PC-3 (cell line): ENCODE measurements at regions of chr10 and their contacts with region 1.

Region 1: GRCh38 chr10:110497438-110498086 is at the start of gene DUSP5:
- DNase-seq: peak; percentile 95
- ATAC-seq: peak; percentile 34
- H3K4me3 ChIP-seq: peak within 1 kb of the TSS; percentile 96
- H3K27ac ChIP-seq: peak within 1 kb of the TSS; percentile 80
- H3K4me1 ChIP-seq: peaks cover 38% of the 10 kb centered on the region
- H3K27me3 ChIP-seq: no peaks in the 10 kb centered on the region
- CTCF ChIP-seq: no peak
- total RNA-seq, gene DUSP5: 205 and 206 TPM in 2 replicates

Region 2: DNA sequence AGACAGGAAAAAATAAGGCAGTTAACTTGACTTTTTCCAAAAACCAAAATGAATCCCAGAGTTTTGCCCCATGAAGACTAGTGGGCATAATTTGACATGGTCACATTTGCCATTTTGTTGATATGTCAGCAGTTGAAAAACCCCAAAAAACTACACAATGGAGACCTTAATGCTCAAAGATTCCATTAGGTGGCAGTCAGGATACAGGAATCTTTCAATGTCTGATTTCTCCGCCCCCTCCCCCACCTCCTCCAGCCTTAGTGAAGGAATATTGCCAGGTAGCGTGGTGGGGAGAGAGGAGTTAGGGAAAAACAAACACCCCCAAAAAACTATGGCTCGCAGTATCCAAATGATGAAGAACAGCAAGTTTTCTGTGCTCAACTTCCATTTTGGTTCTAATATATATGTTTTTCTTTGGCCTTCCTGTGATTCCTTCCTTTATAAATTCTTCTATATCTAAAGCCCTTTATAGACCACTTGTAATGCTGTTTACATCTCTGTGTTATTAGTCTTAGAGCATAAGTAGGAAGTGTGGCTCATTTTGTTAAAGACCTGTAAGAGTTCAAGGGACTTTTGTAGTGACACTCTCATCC is 186.1 kb before region 1 on chr10:
- CTCF ChIA-PET with region 1: no interaction called
- POLR2A ChIA-PET with region 1: interaction called, 4 read pairs
- intact Hi-C with region 1: loop called (anchors 1 kb)
- DNase-seq: peak; percentile 76
- ATAC-seq: peak; percentile 65
- H3K4me3 ChIP-seq: no peak overlapping the region
- H3K27ac ChIP-seq: peak overlapping the region; percentile 35
- H3K4me1 ChIP-seq: peaks cover 27% of the 10 kb centered on the region
- H3K27me3 ChIP-seq: no peaks in the 10 kb centered on the region
- CTCF ChIP-seq: peak; percentile 73

Region 3: GRCh38 chr10:110398419-110399162 is 99.0 kb before region 1 on chr10:
- CTCF ChIA-PET with region 1: no interaction called
- POLR2A ChIA-PET with region 1: interaction called, 6 read pairs
- intact Hi-C with region 1: loop called (anchors 1 kb)
- DNase-seq: peak; percentile 96
- ATAC-seq: peak; percentile 82
- H3K4me3 ChIP-seq: peak overlapping the region; percentile 41
- H3K27ac ChIP-seq: peak overlapping the region; percentile 98
- H3K4me1 ChIP-seq: peaks cover 52% of the 10 kb centered on the region
- H3K27me3 ChIP-seq: no peaks in the 10 kb centered on the region
- CTCF ChIP-seq: no peak

Region 4: GRCh38 chr10:110525349-110526260 is 28.0 kb after region 1 on chr10:
- CTCF ChIA-PET with region 1: no interaction called
- POLR2A ChIA-PET with region 1: no interaction called
- intact Hi-C with region 1: no loop called
- DNase-seq: peak; percentile 64
- ATAC-seq: peak; percentile 53
- H3K4me3 ChIP-seq: no peak overlapping the region
- H3K27ac ChIP-seq: peak overlapping the region; percentile 54
- H3K4me1 ChIP-seq: peaks cover 51% of the 10 kb centered on the region
- H3K27me3 ChIP-seq: no peaks in the 10 kb centered on the region
- CTCF ChIP-seq: no peak